BJ (cell line): ENCODE measurements at regions of chr12 and their contacts with region 1.

Region 1: GRCh38 chr12:50111693-50112455 is at the start of gene COX14:
- DNase-seq: peak; percentile 98
- H3K4me3 ChIP-seq: peak within 1 kb of the TSS; percentile 100
- H3K27me3 ChIP-seq: no peaks in the 10 kb centered on the region
- CTCF ChIP-seq: peak; percentile 98
- polyA plus RNA-seq, gene COX14: 85.7 and 104 TPM in 2 replicates

Region 2: DNA sequence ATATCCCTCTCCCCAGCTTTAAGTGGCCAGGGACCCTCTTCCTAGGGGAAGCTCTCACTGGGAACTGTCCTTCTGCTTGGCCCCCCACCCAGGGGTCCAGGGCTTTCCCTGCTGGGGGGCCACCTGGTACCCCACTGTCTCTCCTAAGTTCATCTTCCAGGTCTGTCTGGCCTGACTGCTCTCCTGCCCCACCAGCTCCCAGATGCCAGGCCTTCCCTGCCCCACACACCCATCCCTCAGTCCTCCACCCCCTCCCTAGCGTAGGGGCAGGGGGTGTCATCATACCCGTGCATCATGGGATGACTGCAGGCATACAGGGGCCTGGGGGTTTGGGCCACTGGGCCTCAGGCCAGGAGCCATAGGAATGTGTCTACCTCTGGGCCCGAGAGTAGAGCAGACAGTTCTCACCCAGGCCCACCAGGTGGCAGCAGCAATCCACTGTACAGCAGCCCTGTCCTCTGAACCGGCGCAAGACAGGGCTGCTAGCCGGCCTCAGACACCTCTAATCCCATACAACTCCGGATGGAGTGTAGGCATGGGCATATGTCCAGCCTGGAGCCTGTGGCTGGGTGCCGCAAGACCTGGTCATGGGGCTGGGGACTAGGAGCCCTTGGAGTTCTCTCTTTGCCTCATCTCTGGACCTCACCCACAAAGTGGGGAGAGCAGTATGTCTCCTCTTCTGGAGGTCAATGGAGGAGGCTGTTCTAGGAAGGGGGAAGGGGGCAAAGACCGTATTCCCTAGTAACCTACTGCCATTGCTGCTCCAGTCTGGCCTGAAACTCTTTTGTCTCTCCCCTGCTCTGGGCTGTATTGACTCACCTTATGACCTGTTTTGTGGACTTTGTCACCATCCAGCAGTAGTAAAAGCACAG is 36.7 kb before region 1 on chr12:
- CTCF ChIA-PET with region 1: interaction called, 10 read pairs
- POLR2A ChIA-PET with region 1: no interaction called
- DNase-seq: no peak
- H3K4me3 ChIP-seq: no peak overlapping the region
- H3K27me3 ChIP-seq: no peaks in the 10 kb centered on the region
- CTCF ChIP-seq: peak; percentile 91

Region 3: GRCh38 chr12:50097952-50098351 is 13.9 kb before region 1 on chr12:
- CTCF ChIA-PET with region 1: interaction called, 62 read pairs
- POLR2A ChIA-PET with region 1: interaction called, 19 read pairs
- DNase-seq: no peak
- H3K4me3 ChIP-seq: no peak overlapping the region
- H3K27me3 ChIP-seq: no peaks in the 10 kb centered on the region
- CTCF ChIP-seq: no peak

Region 4: GRCh38 chr12:50162230-50162629 is 50.4 kb after region 1 on chr12:
- CTCF ChIA-PET with region 1: interaction called, 25 read pairs
- POLR2A ChIA-PET with region 1: interaction called, 5 read pairs
- DNase-seq: no peak
- H3K4me3 ChIP-seq: no peak overlapping the region
- H3K27me3 ChIP-seq: no peaks in the 10 kb centered on the region
- CTCF ChIP-seq: no peak

Region 5: GRCh38 chr12:50174971-50175715 is 63.3 kb after region 1 on chr12:
- CTCF ChIA-PET with region 1: interaction called, 29 read pairs
- POLR2A ChIA-PET with region 1: interaction called, 3 read pairs
- DNase-seq: no peak
- H3K4me3 ChIP-seq: no peak overlapping the region
- H3K27me3 ChIP-seq: no peaks in the 10 kb centered on the region
- CTCF ChIP-seq: peak; percentile 51

Region 6: GRCh38 chr12:50222275-50222795 is 110.5 kb after region 1 on chr12:
- CTCF ChIA-PET with region 1: interaction called, 12 read pairs
- POLR2A ChIA-PET with region 1: no interaction called
- DNase-seq: peak; percentile 84
- H3K4me3 ChIP-seq: peak overlapping the region; percentile 98
- H3K27me3 ChIP-seq: no peaks in the 10 kb centered on the region
- CTCF ChIP-seq: peak; percentile 55